Mucosa of descending colon (tissue), 3 donors: ENCODE measurements at regions of chr7 and their contacts with region 1.

Region 1: DNA sequence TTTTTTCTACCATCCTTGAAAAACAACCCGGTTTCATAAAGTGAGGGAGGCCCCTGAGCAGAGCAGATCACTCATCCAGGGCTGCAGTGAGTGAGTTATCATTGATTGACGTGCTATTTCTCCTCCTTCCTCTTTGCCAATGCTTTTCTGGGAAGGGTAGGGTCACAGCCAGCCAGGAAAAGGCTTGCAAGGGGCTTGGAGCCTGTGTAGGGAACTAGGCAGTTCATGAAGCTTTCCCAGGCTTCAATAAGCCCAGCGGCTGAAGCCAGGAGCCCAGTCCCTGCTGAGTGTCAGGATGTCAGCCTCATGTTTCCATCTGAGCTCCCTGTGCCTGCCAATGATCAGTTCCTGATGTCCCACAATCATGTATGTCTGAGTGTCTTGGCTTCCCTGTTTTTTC is 584.7 kb downstream of the GALNT17 start:
- DNase-seq: no peak
- ATAC-seq: no peak
- H3K4me3 ChIP-seq: no peak overlapping the region
- H3K4me1 ChIP-seq: no peaks in the 10 kb centered on the region
- CTCF ChIP-seq: no peak

Region 2: GRCh38 chr7:71377469-71377868 is 339.2 kb before region 1 on chr7:
- intact Hi-C with region 1: loop called in 1 of 2 experiments (anchors 10 kb)
- DNase-seq: no peak
- ATAC-seq: no peak
- H3K4me3 ChIP-seq: no peak overlapping the region
- H3K4me1 ChIP-seq: no peaks in the 10 kb centered on the region
- CTCF ChIP-seq: no peak